Sciatic nerve (tissue), 2 donors: ENCODE measurements at regions of chr11 and their contacts with region 1.

Region 1: GRCh38 chr11:35427071-35427470 is 7.7 kb upstream of the SLC1A2 start:
- DNase-seq: peak; percentile 64
- ATAC-seq: peak; percentile 96

Region 2: GRCh38 chr11:33617665-33618350 is 1809.3 kb before region 1 on chr11:
- intact Hi-C with region 1: loop called (anchors 5 kb)
- DNase-seq: no peak
- ATAC-seq: no peak